GM18951 (cell line): ENCODE measurements at regions of chr19 and their contacts with region 1.

Region 1: DNA sequence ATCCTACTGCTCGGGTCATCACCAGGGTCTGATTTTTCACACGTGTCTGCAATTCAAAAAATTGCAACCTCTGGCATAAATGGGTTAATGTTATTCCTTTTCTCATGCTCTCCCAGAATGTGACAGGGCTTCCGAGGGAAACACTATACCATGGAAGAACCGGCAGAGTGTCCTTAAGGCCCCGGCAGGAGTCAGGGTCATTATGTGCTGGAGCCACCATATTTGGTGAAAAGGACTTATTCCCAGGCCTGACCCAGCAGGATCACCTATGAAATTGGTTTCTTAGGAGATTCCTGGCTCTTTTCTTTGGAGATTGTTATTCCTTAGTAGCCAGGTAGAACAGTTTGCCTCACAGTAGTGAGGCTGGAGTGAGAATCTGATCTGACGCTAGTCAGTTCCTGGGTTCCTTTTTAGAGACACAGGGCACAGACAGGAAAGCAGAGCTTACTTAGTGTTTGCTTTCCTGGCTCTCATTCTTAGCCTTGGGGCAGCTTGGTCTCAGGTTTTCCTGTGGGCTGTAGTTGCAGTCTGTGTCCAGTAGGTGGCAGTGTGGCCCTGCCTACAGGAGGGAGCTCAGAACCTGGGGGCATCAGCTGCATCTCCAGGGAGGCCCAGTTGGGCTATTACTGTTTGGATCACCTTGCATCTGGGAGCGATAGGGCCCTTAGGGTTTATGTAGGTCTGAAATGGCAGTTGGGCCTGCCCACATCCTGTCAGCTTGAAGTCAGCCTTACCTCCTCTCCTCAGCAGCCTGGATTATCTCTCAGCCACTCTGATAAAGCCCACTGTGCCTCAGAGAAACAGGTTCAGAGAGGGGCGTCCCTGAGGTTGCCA is 12.4 kb downstream of the SNRNP70 start:
- POLR2A ChIP-seq: no peak

Region 2: DNA sequence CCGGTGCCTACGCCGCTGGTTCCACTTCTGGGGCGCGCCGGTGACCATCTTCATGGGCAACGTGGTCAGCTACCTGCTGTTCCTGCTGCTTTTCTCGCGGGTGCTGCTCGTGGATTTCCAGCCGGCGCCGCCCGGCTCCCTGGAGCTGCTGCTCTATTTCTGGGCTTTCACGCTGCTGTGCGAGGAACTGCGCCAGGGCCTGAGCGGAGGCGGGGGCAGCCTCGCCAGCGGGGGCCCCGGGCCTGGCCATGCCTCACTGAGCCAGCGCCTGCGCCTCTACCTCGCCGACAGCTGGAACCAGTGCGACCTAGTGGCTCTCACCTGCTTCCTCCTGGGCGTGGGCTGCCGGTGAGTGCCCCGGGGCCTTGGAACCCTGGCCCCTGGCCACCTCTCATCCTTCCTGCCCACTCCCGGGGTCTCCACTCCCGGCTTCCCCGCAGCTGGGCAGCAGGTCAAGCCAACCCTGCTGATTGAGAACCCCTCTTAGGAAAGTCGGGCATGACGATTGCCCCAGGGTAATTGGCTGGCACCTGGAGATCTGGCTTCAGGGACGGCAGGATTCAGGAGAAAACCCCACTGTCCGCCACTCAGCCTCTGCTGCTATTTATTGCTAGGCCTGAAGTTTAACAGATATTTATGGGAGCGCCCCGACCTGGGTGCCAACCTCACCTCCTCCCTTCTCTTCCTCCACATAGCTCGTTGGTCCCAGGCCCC is 99.0 kb after region 1 on chr19:
- in situ Hi-C with region 1: loop called (anchors 10 kb)
- POLR2A ChIP-seq: no peak